ENCODE measurements at regions of chr6 and their contacts with region 1.

Region 1: DNA sequence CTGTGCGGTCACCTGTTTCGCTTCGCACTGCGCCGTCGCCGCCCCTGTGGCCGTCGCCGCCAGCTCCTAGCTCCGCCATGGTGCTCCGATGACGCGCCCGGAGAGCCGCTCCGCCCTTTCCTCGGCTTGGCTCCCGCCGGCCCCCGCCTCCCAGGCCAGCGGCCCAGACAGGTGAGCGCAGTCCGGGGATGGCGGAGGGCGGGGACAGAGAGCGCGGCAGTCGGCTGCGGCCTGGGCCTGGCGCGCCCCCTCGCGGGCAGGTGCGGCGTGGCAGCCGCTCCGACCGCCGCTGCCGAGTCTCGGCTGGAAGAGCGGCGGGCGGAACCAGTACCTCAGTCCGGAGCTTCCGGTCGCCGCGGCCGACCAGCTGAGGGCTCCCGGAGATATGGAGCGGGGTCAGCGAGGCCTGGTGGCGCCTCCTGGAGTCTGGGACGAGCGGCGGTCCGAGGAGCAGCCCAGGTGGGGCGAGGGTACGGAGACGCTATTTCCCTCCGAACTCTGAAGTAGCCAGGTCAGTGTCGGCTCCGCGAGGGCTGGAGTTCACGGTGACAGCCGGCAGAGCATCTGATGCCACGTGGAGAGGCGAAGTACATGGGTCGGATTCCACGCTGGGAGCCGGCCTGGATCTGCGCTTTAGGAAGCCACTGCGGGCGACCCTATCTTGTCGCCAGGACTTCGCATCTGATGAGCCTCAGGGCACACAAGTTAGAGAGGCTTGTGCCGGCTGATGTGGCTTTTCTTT is at the start of gene MAP7:
- DNase-seq: peak; percentile 32 to 79 (median 63)
- ATAC-seq: peak; percentile 92
- H3K4me3 ChIP-seq: peak within 1 kb of the TSS; percentile 36 to 52
- H3K4me3 Mint-ChIP-seq: peak within 1 kb of the TSS; percentile 74
- H3K27ac ChIP-seq: no peak within 1 kb of the TSS
- H3K27ac Mint-ChIP-seq: peak within 1 kb of the TSS; percentile 4
- H3K4me1 ChIP-seq: peaks cover 12% of the 10 kb centered on the region
- H3K4me1 Mint-ChIP-seq: peaks cover 11% of the 10 kb centered on the region
- H3K27me3 ChIP-seq: peaks cover 12 to 14% of the 10 kb centered on the region in 2 experiments
- H3K27me3 Mint-ChIP-seq: peaks cover 37% of the 10 kb centered on the region
- CTCF ChIP-seq: peak; percentile 97
- total RNA-seq, gene MAP7: 0.19 to 0.24 TPM

Region 2: GRCh38 chr6:135506270-135506997 is 1044.1 kb before region 1 on chr6:
- CTCF ChIA-PET with region 1: no interaction called
- POLR2A ChIA-PET with region 1: no interaction called
- intact Hi-C with region 1: loop called in 1 of 2 experiments (anchors 10 kb)
- DNase-seq: peak in 3 of 9 experiments; percentile 7 to 76 (median 65)
- ATAC-seq: peak; percentile 82
- H3K4me3 ChIP-seq: no peak overlapping the region
- H3K4me3 Mint-ChIP-seq: peak overlapping the region; percentile 13
- H3K27ac ChIP-seq: peak overlapping the region in 1 of 2 experiments; percentile 30
- H3K27ac Mint-ChIP-seq: no peak overlapping the region
- H3K4me1 ChIP-seq: no peaks in the 10 kb centered on the region
- H3K4me1 Mint-ChIP-seq: peaks cover 4% of the 10 kb centered on the region
- H3K27me3 ChIP-seq: no peaks in the 10 kb centered on the region
- H3K27me3 Mint-ChIP-seq: no peaks in the 10 kb centered on the region
- CTCF ChIP-seq: peak; percentile 63

Region 3: GRCh38 chr6:136249811-136250685 is 300.5 kb before region 1 on chr6 and contains the start of gene MTFR2:
- CTCF ChIA-PET with region 1: no interaction called
- POLR2A ChIA-PET with region 1: no interaction called
- intact Hi-C with region 1: loop called in 1 of 2 experiments (anchors 5 kb)
- DNase-seq: peak; percentile 85 to 99 (median 92)
- ATAC-seq: peak; percentile 97
- H3K4me3 ChIP-seq: peak within 1 kb of the TSS; percentile 57 to 74
- H3K4me3 Mint-ChIP-seq: peak within 1 kb of the TSS; percentile 97
- H3K27ac ChIP-seq: peak within 1 kb of the TSS in 1 of 2 experiments; percentile 17
- H3K27ac Mint-ChIP-seq: peak within 1 kb of the TSS; percentile 71
- H3K4me1 ChIP-seq: peaks cover 11% of the 10 kb centered on the region
- H3K4me1 Mint-ChIP-seq: peaks cover 36% of the 10 kb centered on the region
- H3K27me3 ChIP-seq: no peaks in the 10 kb centered on the region
- H3K27me3 Mint-ChIP-seq: no peaks in the 10 kb centered on the region
- CTCF ChIP-seq: no peak
- total RNA-seq, gene MTFR2: 1.3 to 1.5 TPM

Region 4: DNA sequence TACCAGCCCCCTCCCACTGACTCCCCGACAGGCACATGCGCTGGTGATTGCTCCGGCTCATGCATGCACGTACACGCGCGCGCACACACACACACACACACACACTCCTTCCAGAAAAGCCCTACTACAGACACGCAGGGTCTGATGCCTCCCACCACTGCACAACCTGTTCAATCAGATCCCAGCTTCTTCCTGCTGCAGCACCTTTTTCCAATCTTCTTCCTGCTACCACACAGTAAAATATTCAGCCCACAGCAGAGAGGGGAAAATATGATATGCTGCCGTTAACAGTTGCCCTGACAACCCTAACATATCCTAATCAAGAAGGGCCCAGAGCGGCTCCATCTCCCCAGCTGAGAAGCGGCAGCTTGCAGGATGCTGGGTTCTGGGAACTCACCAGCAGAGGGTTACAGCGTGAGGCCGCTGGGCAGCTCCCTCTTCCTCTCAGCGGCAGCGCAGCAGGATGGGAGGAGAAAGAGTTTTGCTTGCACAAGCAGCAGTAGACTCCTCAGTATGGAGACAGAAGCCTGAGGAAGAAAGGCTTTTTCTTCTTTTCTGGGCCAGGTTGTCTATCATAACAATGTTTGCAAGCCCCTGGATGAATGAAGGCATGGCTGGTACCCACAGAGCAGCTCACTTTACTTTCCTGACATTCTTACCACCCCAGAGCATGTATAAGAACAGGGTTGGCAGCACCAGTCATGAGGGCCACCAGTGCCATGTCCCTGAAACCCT is 24.1 kb before region 1 on chr6:
- CTCF ChIA-PET with region 1: interaction called, 4 read pairs
- POLR2A ChIA-PET with region 1: no interaction called
- intact Hi-C with region 1: loop called in 1 of 2 experiments (anchors 2 kb)
- DNase-seq: peak in 5 of 9 experiments; percentile 18 to 59 (median 24)
- ATAC-seq: peak; percentile 52
- H3K4me3 ChIP-seq: no peak overlapping the region
- H3K4me3 Mint-ChIP-seq: peak overlapping the region; percentile 42
- H3K27ac ChIP-seq: no peak overlapping the region
- H3K27ac Mint-ChIP-seq: no peak overlapping the region
- H3K4me1 ChIP-seq: peaks cover 9% of the 10 kb centered on the region
- H3K4me1 Mint-ChIP-seq: peaks cover 15% of the 10 kb centered on the region
- H3K27me3 ChIP-seq: no peaks in the 10 kb centered on the region
- H3K27me3 Mint-ChIP-seq: peaks cover 9% of the 10 kb centered on the region
- CTCF ChIP-seq: no peak

Region 5: GRCh38 chr6:136563386-136564152 is 13.1 kb after region 1 on chr6:
- CTCF ChIA-PET with region 1: interaction called, 12 read pairs
- POLR2A ChIA-PET with region 1: no interaction called
- intact Hi-C with region 1: no loop called
- DNase-seq: peak in 1 of 9 experiments; percentile 24
- ATAC-seq: no peak
- H3K4me3 ChIP-seq: no peak overlapping the region
- H3K4me3 Mint-ChIP-seq: no peak overlapping the region
- H3K27ac ChIP-seq: no peak overlapping the region
- H3K27ac Mint-ChIP-seq: no peak overlapping the region
- H3K4me1 ChIP-seq: no peaks in the 10 kb centered on the region
- H3K4me1 Mint-ChIP-seq: peaks cover 8% of the 10 kb centered on the region
- H3K27me3 ChIP-seq: no peaks in the 10 kb centered on the region
- H3K27me3 Mint-ChIP-seq: no peaks in the 10 kb centered on the region
- CTCF ChIP-seq: no peak

Region 6: DNA sequence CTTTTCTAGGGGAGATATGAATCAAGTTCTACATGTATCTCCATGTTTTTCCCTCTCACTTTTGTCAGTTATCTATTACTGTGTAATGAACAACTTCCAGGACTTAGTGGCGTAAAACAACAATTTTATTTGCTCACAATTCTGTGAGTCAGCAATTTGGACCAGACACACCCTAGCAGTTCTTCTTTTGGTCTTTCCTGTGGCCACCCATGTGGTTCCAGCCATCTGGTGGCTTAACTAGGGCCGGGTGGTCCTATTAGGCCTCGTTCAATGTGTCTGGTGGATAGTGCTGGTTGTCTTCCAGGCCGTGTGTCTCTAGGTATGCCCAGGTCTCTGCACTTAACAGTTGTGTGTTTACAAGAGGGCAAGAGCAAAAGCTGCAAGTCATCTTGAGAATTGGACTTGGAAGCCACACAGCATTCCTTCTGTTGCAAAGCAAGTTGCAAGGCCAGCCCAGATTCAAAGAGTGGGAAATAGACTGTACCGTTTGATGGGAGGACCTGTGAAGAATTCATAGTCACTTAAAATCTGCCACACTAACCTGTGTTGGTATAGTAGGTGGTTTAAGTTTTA is 350.8 kb after region 1 on chr6:
- CTCF ChIA-PET with region 1: no interaction called
- POLR2A ChIA-PET with region 1: no interaction called
- intact Hi-C with region 1: no loop called
- DNase-seq: no peak
- ATAC-seq: no peak
- H3K4me3 ChIP-seq: no peak overlapping the region
- H3K4me3 Mint-ChIP-seq: no peak overlapping the region
- H3K27ac ChIP-seq: no peak overlapping the region
- H3K27ac Mint-ChIP-seq: no peak overlapping the region
- H3K4me1 ChIP-seq: no peaks in the 10 kb centered on the region
- H3K4me1 Mint-ChIP-seq: no peaks in the 10 kb centered on the region
- H3K27me3 ChIP-seq: no peaks in the 10 kb centered on the region
- H3K27me3 Mint-ChIP-seq: no peaks in the 10 kb centered on the region
- CTCF ChIP-seq: no peak

Measured in CD8-positive, alpha-beta T cell (primary cell).